Activated B cell treated with CpG ODN at 0.5 μM for 24 hours (primary cell): ENCODE measurements at regions of chr1 and their contacts with region 1.

Region 1: DNA sequence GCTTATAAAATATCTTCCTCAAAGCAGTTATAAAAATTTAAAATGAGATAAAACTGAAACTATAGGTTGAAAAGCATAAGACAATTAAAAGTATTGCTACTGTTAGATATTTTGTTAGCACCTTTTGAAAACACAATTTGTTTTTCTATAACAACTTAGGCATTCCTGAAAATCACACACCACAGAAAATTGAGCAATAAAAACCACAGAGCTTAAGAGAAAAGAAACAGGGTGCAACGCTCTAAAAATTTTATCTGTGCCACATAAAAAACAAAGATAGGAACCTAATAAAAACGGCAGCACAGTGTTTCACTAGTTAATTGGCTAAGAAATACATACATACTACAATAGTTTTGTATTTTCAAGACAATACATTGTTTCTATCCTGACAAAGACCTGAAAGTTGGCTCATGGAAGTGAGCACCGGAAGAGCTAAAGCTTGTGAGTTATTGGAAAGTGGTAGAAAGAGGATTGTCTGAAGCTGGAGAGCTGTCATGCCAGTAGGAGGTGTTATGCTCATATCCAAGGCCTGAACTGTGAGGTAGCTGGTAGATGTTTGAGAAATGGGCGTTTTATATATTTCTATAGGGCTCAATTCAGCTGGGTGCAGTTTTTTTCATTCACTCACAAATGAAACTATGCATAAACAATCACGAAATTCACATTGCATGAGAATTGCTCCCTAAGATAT is 45.8 kb downstream of the RGS7 start:
- DNase-seq: no peak
- ATAC-seq: no peak
- H3K4me3 Mint-ChIP-seq: no peak overlapping the region
- H3K27ac Mint-ChIP-seq: no peak overlapping the region
- H3K4me1 Mint-ChIP-seq: no peaks in the 10 kb centered on the region
- H3K27me3 Mint-ChIP-seq: no peaks in the 10 kb centered on the region
- CTCF ChIP-seq: no peak

Region 2: GRCh38 chr1:241323514-241324195 is 12.5 kb after region 1 on chr1:
- CTCF ChIA-PET with region 1: no interaction called
- POLR2A ChIA-PET with region 1: no interaction called
- intact Hi-C with region 1: no loop called
- DNase-seq: no peak
- ATAC-seq: no peak
- H3K4me3 Mint-ChIP-seq: no peak overlapping the region
- H3K27ac Mint-ChIP-seq: no peak overlapping the region
- H3K4me1 Mint-ChIP-seq: peaks cover under 1% of the 10 kb centered on the region
- H3K27me3 Mint-ChIP-seq: no peaks in the 10 kb centered on the region
- CTCF ChIP-seq: no peak

Region 3: DNA sequence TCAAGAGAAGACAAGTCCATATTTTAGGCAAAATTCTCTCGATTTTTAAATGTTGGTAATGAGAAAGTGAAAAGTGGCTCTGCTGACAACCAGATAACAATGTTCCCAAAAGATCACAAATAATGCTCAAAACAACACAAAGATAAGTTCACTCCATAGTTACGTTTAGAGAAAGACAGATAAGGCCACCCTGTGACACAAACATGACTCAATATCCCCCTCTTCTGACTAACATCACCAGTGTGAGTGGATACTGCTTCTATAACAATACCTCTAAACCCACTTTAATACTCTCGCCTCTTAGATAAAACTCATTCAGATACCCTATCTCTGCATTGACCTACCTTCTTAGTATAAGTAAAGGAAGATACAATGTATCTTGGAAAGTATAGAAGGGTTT is 97.0 kb after region 1 on chr1:
- CTCF ChIA-PET with region 1: no interaction called
- POLR2A ChIA-PET with region 1: no interaction called
- intact Hi-C with region 1: loop called (anchors 5 kb)
- DNase-seq: no peak
- ATAC-seq: no peak
- H3K4me3 Mint-ChIP-seq: no peak overlapping the region
- H3K27ac Mint-ChIP-seq: no peak overlapping the region
- H3K4me1 Mint-ChIP-seq: no peaks in the 10 kb centered on the region
- H3K27me3 Mint-ChIP-seq: peaks cover 4% of the 10 kb centered on the region
- CTCF ChIP-seq: no peak

Region 4: GRCh38 chr1:241485554-241485992 is 174.4 kb after region 1 on chr1:
- CTCF ChIA-PET with region 1: interaction called, 5 read pairs
- POLR2A ChIA-PET with region 1: no interaction called
- intact Hi-C with region 1: loop called (anchors 1 kb)
- DNase-seq: no peak
- ATAC-seq: no peak
- H3K4me3 Mint-ChIP-seq: no peak overlapping the region
- H3K27ac Mint-ChIP-seq: no peak overlapping the region
- H3K4me1 Mint-ChIP-seq: peaks cover 6% of the 10 kb centered on the region
- H3K27me3 Mint-ChIP-seq: no peaks in the 10 kb centered on the region
- CTCF ChIP-seq: no peak